GM10248 (cell line): ENCODE measurements at regions of chr11 and their contacts with region 1.

Region 1: DNA sequence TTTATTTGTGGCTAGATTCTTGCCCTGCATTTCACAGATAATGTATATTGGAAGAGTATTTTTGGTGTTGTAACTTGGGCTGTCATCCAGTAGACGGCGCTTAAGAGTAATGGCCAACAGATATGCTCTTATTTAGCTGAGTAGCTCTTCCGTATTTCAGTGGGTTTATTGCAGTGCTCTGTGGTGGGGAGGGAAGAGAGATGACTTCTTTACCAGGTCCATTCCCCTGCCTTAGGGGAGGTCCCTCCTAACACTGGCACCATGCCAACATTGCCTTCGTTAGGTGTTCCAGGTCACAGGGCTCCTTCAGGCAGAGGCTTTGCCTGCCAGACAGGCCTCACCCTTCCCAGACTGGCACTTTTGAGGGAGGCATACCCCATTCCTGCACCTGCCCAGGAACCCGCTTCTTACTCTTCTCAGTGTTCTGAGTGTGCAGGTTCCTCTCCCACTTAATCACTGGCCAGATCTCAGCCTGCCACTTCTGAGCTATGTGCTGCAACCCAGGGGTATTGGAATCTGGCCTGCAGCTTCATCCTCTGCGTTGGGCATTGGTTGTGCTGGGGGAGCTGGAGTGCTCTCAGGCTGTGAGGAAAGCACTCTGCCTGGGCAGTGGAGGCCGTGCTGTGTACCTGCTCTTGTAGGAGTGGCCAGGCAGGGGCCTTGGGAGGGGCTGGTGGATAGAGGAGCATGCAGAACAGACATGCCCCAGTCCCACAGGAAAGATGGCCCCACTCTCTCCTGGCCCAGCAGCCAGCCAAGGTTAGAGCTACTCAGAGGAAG is 29.4 kb upstream of the SLN start:
- DNase-seq: peak; percentile 61
- CTCF ChIP-seq: peak; percentile 74

Region 2: GRCh38 chr11:107757661-107758060 is 16.4 kb after region 1 on chr11:
- CTCF ChIA-PET with region 1: interaction called, 42 read pairs
- POLR2A ChIA-PET with region 1: no interaction called
- DNase-seq: no peak
- CTCF ChIP-seq: no peak

Region 3: DNA sequence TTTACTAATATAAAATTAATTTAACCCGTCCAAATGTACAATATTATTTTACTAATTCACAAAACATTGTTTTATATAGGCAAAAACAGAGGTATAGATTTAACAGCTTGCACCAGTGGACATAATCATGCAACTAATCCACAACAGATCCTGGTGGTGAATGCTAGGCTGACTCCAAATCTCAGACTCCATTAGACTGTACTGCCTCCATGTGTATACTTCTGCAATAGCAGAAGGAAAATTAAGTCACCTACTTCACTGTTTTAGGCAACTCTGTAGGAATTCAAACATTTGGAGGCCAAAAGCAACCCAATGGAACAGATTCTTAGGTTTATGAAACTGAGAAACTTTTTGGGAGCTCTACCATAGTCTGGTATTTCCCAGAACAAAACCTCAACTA is 157.0 kb after region 1 on chr11:
- CTCF ChIA-PET with region 1: interaction called, 29 read pairs
- POLR2A ChIA-PET with region 1: no interaction called
- DNase-seq: peak; percentile 43
- CTCF ChIP-seq: peak; percentile 71